Mucosa of descending colon (tissue), 3 donors: ENCODE measurements at regions of chr2 and their contacts with region 1.

Region 1: GRCh38 chr2:215664847-215665525 is 229.1 kb upstream of the FN1 start:
- DNase-seq: no peak
- ATAC-seq: peak; percentile 61
- H3K4me3 ChIP-seq: no peak overlapping the region
- H3K4me1 ChIP-seq: no peaks in the 10 kb centered on the region
- CTCF ChIP-seq: no peak

Region 2: DNA sequence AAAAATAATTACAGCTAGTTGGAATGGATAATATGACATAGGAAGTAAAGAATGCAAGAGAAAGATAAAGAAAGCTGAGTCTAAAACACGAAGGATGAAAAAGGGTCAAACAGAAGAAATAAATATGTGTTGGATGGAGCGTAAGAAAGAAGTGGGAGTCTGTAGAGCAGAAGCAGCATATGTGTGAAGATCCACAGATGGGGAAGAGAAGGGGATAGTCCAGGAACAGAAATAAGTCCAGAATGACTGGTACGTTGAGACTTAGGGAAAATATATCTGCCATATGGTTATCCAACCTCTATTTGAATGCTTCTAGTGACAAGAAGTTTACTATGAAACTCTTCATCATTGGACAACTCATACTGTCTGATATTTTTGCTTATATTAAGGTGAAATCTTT is 544.6 kb before region 1 on chr2:
- intact Hi-C with region 1: no loop called
- DNase-seq: no peak
- ATAC-seq: no peak
- H3K4me3 ChIP-seq: no peak overlapping the region
- H3K4me1 ChIP-seq: no peaks in the 10 kb centered on the region
- CTCF ChIP-seq: no peak

Region 3: GRCh38 chr2:215711471-215712034 is 46.6 kb after region 1 on chr2:
- intact Hi-C with region 1: loop called in 1 of 2 experiments (anchors 10 kb)
- DNase-seq: no peak
- ATAC-seq: peak; percentile 40
- H3K4me3 ChIP-seq: no peak overlapping the region
- H3K4me1 ChIP-seq: no peaks in the 10 kb centered on the region
- CTCF ChIP-seq: no peak

Region 4: DNA sequence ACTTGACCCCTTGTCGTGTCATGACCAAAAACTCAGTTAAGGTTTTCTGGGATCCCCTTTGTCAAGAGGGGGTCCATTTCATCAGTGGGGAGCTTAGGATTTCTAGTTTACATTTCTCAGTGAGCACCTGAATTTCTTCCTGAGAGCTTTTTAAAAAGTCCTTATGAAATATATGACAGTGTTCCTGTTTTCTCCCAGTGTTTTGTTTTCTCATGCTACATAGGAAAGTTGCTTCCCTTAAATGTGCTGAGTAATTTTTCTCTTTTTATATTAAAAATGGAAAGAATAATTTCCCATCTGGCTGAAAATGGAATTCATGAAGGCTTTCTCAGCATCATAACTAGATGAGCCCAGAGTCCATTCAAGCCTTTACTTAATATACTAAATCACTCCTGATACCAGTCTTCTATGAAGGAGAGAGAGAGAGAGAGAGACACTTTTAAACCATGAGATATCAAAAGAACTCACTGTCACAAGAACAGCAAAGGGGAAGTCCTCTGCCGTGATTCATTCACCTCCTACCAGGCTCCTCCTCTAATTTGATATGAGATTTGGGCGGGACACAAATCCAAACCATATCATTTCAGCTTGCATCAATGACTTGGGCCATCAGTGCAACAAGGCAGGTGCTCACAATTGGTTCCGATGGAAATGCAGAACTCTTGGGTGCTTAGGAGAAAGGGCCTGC is 505.2 kb after region 1 on chr2:
- intact Hi-C with region 1: no loop called
- DNase-seq: no peak
- ATAC-seq: no peak
- H3K4me3 ChIP-seq: no peak overlapping the region
- H3K4me1 ChIP-seq: no peaks in the 10 kb centered on the region
- CTCF ChIP-seq: no peak